ENCODE measurements at regions of chr10 and their contacts with region 1.

Region 1: DNA sequence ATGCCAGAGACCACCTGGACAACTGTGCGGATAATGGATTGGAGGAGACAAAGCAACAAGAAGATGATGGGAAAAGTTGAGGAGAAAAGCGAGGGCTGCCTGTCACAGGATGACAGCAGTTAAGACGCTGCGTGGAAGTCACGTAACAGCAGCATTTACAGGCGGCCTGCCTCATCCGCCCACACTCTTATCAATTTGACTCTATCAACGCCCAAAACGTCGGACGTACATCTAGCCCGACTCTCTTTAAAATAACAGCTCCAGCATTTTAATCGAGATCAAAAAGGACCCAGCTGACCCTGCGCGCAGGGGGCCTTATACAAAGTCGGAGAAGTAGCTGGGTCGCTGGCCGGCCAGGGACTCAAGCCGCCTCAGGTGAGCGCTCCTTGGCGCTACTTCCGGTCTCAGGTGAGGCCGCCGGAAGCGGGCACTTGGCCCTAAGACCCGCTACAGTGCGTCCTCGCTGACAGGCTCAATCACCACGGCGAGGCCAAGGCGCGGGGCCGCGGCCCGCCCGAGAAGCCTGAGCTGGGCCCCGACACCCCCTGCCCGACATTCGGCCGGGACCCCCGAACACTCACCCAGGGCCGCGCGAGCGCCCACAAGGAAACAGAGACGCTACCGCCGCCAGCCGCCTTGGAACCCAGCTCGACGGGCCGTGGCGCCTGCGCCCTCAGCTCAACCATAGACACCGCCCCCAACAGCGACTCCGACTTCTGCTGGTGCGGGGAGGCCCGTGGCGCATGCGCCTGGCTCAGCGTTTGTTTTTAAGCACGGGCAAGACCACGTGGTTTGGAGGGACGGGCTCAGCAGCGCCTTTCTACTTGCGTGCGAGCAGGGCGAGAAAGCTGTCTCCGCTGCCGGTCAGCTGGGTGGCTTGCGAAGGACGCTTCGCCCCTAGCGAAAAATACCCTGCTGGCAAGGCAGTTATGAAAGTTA is at the start of gene ERCC6:
- H3K4me3 ChIP-seq: peak within 1 kb of the TSS; percentile 62
- H3K27ac ChIP-seq: peak within 1 kb of the TSS; percentile 18; the same call in 1 of the 2 replicates
- H3K4me1 ChIP-seq: peaks cover 5% of the 10 kb centered on the region; the same call in 1 of the 2 replicates
- CTCF ChIP-seq: peak; percentile 61; the same call in 1 of the 2 replicates

Region 2: DNA sequence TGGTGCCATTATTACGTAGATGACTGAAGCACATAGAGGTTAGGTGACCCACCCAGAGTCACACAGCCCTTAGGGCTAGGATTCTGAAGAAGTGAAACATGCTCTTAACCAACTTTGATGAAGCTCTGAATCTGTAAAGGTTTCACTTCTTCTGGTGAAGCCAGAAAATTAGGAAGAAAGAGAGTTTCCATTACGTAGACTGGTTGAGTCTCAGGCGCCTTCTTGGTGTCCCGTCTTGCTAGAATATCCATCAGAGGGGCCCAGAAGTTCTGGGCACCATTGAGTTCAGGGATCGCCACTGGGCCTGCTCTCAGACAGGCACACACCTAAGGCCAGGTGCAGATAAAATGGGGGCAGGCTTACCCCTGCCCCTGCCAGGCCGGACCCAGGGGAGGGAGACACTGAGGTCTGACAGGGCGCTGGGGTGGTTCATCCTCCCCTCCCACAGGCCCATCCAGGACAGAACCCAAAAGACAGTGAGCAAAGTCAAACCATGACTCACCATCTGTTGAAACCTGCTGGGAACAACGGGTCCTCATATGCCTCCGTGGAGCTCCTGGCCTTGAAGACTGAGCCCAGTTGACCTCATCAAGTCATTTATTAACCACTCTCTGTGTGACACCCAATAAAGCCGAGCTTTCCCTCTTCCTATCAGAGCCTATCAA is 175.9 kb before region 1 on chr10:
- CTCF ChIA-PET with region 1: no interaction called
- POLR2A ChIA-PET with region 1: no interaction called
- H3K4me3 ChIP-seq: no peak overlapping the region
- H3K27ac ChIP-seq: no peak overlapping the region
- H3K4me1 ChIP-seq: no peaks in the 10 kb centered on the region
- CTCF ChIP-seq: no peak

Region 3: DNA sequence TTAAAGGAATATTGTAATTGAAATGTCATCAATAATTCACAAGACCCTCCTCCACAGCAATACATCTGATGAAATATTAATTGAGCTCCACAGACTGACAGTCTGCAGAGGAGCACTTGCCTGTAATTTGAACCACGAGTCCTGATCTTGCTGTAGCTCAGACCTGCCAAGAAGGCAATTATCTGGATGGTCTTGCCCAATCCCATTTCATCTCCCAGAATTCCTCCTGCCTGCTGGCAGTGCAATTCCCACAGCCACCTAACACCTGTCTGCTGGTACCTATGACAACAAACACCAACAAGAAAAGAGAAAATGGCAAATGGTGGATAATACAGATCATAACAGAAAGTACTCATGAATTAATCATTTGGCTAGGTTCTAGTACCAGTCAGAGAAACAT is 38.2 kb before region 1 on chr10:
- CTCF ChIA-PET with region 1: no interaction called
- POLR2A ChIA-PET with region 1: no interaction called
- H3K4me3 ChIP-seq: no peak overlapping the region
- H3K27ac ChIP-seq: no peak overlapping the region
- H3K4me1 ChIP-seq: peaks cover 8% of the 10 kb centered on the region; the same call in 1 of the 2 replicates
- CTCF ChIP-seq: no peak

Region 4: GRCh38 chr10:49552249-49552672 is 13.6 kb after region 1 on chr10:
- CTCF ChIA-PET with region 1: interaction called, 5 read pairs
- POLR2A ChIA-PET with region 1: interaction called, 11 read pairs
- H3K4me3 ChIP-seq: no peak overlapping the region
- H3K27ac ChIP-seq: no peak overlapping the region
- H3K4me1 ChIP-seq: no peaks in the 10 kb centered on the region
- CTCF ChIP-seq: no peak